ENCODE measurements at regions of chr12 and their contacts with region 1.

Region 1: DNA sequence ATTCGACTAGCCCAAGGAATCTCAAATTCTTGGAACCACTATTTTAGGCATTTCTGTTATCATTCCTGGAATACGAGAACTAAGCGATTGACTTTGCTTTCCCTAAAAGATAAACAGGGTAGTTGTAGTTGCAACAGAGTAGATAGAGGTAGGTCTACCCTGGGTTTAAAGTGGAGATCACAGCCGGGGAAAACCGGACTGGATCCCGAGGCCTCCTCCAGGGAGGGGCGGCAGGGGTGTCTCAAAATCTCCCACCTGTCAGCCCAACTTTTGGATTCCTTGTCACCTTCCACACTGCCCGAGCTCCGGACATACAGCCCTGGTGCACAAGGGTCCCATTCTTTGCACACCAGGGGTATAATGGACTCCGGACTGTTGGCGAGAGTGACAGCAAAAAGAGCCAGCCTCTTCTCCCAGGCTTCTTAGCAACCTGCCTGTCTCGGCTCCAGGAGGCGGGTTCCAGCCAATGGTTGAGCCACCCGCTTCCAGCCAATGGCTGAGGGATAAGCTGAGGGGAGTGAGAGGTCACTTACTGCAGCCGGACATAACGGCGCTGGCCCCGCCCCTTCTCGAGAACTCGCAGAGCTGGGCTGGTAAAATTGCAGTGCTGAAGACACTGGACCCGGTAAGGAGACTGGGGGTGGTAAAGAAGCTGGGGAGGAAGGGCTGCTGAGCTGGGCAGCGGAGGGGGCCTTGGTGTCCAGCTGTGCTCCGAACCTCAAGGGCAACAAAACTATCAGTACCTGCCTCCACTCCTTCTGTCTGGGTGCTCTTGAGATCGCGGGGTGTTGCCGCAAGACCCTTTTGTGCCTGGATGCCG is at the start of gene SUOX:
- DNase-seq: peak; percentile 94 to 95
- H3K4me3 ChIP-seq: peak within 1 kb of the TSS; percentile 70
- H3K27ac ChIP-seq: no peak within 1 kb of the TSS
- H3K4me1 ChIP-seq: peaks cover 9% of the 10 kb centered on the region
- H3K27me3 ChIP-seq: no peaks in the 10 kb centered on the region
- CTCF ChIP-seq: no peak; the same call in 1 of the 2 replicates
- total RNA-seq, gene SUOX: 20.4 and 22.7 TPM in 2 replicates

Region 2: DNA sequence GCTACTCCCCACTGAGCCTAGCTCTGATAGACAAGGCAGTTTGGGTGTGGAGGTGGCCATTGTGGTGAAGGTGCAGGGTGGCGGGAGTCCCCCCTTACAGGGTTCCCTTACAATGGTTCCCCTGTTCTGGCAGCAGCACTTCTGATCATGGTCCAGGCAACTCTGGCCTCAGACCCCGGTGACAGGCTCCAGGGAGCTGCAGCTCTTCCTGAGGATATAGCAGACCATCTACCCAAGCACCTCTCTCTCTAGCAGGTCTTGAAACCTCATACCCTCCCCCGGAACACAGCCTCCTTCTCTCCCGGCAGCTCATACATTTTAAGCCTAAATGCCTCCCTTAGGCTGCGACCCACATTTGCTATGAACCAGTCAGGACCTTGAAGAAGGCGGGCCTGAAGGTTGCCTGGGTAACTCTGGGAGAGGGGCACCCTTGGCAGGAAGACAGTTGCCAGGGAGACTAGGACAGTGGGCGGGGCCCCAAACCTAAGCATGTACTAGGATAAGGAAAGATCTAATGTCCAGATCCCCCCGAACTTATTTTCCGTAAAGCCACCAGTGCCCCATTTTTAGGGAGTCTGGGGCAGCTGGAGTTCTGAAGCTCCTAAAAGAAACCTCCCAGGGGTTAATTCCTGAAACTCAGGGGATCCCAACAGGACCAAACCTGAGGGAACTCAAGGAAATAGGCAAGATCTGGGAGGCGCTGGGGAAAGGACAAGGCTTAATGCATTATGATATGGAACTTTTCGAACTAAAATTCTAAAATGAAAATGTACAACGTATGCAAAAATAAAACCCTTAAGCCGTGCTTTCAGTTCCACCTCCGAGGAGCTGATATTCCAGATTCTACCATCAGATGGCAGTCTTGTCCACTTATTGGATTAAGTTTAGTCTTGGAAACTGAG is 258.6 kb before region 1 on chr12:
- CTCF ChIA-PET with region 1: interaction called, 9 read pairs
- POLR2A ChIA-PET with region 1: interaction called, 17 read pairs
- intact Hi-C with region 1: no loop called
- DNase-seq: peak; percentile 68 to 71
- H3K4me3 ChIP-seq: peak overlapping the region; percentile 74
- H3K27ac ChIP-seq: no peak overlapping the region
- H3K4me1 ChIP-seq: peaks cover 12% of the 10 kb centered on the region
- H3K27me3 ChIP-seq: no peaks in the 10 kb centered on the region
- CTCF ChIP-seq: peak; percentile 90

Region 3: GRCh38 chr12:55940065-55940732 is 56.7 kb before region 1 on chr12:
- CTCF ChIA-PET with region 1: no interaction called
- POLR2A ChIA-PET with region 1: no interaction called
- intact Hi-C with region 1: no loop called
- DNase-seq: peak; percentile 62 to 87
- H3K4me3 ChIP-seq: no peak overlapping the region
- H3K27ac ChIP-seq: 0 out of 2 replicates have a peak overlapping the region, but pooled peaks have one; percentile 16
- H3K4me1 ChIP-seq: peaks cover 27% of the 10 kb centered on the region
- H3K27me3 ChIP-seq: no peaks in the 10 kb centered on the region
- CTCF ChIP-seq: peak; percentile 86

Region 4: GRCh38 chr12:55982319-55982936 is 14.5 kb before region 1 on chr12:
- CTCF ChIA-PET with region 1: interaction called, 19 read pairs
- POLR2A ChIA-PET with region 1: no interaction called
- intact Hi-C with region 1: no loop called
- DNase-seq: no peak
- H3K4me3 ChIP-seq: no peak overlapping the region
- H3K27ac ChIP-seq: no peak overlapping the region
- H3K4me1 ChIP-seq: peaks cover 17% of the 10 kb centered on the region
- H3K27me3 ChIP-seq: no peaks in the 10 kb centered on the region
- CTCF ChIP-seq: no peak

Region 5: DNA sequence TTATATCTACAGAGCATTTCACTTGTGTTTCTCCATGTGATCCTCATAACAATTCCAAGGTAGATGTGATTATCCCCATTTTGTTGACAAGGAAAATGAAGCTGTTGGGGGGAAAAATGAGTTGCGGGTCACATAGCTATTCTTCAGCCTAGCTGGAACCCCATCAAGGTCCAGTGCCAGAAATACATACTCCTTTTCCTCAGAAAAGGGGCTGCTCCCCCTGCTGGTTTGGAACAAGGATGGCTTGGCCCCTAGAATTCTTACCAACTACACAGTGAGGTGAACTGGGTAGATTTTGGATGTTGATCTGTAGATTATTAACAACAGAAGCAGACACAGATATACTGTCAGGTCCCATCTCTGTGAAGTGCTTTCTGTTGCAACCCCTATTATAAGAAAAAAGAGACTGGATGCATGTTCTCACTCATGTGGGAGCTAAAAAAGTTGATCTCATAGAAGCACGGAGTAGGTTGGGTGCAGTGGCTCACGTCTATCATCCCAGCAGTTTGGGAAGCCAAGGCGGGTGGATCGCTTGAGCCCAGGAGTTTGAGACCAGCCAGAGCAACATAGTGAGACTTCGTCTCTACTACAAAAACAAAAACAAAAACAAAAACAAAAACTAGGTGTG is 32.9 kb after region 1 on chr12:
- CTCF ChIA-PET with region 1: interaction called, 23 read pairs
- POLR2A ChIA-PET with region 1: interaction called, 3 read pairs
- intact Hi-C with region 1: loop called (anchors 1 kb)
- DNase-seq: peak; percentile 16 to 49
- H3K4me3 ChIP-seq: no peak overlapping the region
- H3K27ac ChIP-seq: peak overlapping the region; percentile 64
- H3K4me1 ChIP-seq: peaks cover 17% of the 10 kb centered on the region
- H3K27me3 ChIP-seq: no peaks in the 10 kb centered on the region
- CTCF ChIP-seq: peak; percentile 79

Region 6: GRCh38 chr12:56071648-56072047 is 74.7 kb after region 1 on chr12:
- CTCF ChIA-PET with region 1: no interaction called
- POLR2A ChIA-PET with region 1: no interaction called
- intact Hi-C with region 1: no loop called
- DNase-seq: peak in 1 of 2 experiments; percentile 58
- H3K4me3 ChIP-seq: no peak overlapping the region
- H3K27ac ChIP-seq: no peak overlapping the region
- H3K4me1 ChIP-seq: peaks cover 4% of the 10 kb centered on the region; the same call in 1 of the 2 replicates
- H3K27me3 ChIP-seq: no peaks in the 10 kb centered on the region
- CTCF ChIP-seq: no peak

Region 7: GRCh38 chr12:56104109-56104814 is 107.3 kb after region 1 on chr12 and contains the start of gene PA2G4:
- CTCF ChIA-PET with region 1: interaction called, 3 read pairs
- POLR2A ChIA-PET with region 1: interaction called, 5 read pairs
- intact Hi-C with region 1: loop called (anchors 2 kb)
- DNase-seq: peak; percentile 97 to 98
- H3K4me3 ChIP-seq: peak within 1 kb of the TSS; percentile 97
- H3K27ac ChIP-seq: peak within 1 kb of the TSS; percentile 50
- H3K4me1 ChIP-seq: peaks cover 25% of the 10 kb centered on the region
- H3K27me3 ChIP-seq: no peaks in the 10 kb centered on the region
- CTCF ChIP-seq: no peak
- total RNA-seq, gene PA2G4: 120 and 159 TPM in 2 replicates